Sciatic nerve (tissue), 2 donors: ENCODE measurements at regions of chr3 and their contacts with region 1.

Region 1: GRCh38 chr3:44198284-44199269 is 43.1 kb upstream of the TOPAZ1 start:
- DNase-seq: peak; percentile 81
- ATAC-seq: peak; percentile 79

Region 2: DNA sequence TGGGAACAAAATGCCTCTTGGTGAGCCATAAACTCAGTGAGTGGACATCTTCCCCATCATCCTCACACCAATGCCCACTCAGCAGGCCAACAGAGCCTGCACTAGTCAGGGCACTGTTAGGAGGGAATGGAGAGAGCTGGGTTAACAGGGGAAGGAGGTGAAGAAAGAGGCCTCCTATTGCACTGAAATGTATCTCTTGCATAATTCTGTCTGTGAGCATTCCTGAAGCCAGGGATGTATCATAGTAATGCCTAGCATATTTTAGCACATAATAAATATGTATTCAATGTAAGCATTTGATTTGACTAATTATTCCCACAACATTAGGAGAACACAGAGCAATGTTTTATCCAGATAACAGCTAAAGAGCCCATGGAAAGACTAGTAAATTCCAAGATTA is 658.0 kb before region 1 on chr3:
- intact Hi-C with region 1: loop called (anchors 10 kb)
- DNase-seq: no peak
- ATAC-seq: no peak

Region 3: GRCh38 chr3:43769471-43770425 is 428.8 kb before region 1 on chr3:
- intact Hi-C with region 1: loop called (anchors 5 kb)
- DNase-seq: peak; percentile 98
- ATAC-seq: peak; percentile 95

Region 4: GRCh38 chr3:44128057-44128775 is 70.4 kb before region 1 on chr3:
- intact Hi-C with region 1: no loop called
- DNase-seq: no peak
- ATAC-seq: no peak